ENCODE measurements at regions of chr1 and their contacts with region 1.

Region 1: GRCh38 chr1:41573785-41574713 is 89.6 kb upstream of the EDN2 start:
- DNase-seq: peak; percentile 56
- ATAC-seq: peak; percentile 99
- H3K4me3 ChIP-seq: no peak overlapping the region
- H3K27ac ChIP-seq: no peak overlapping the region
- H3K4me1 ChIP-seq: peaks cover 14% of the 10 kb centered on the region
- H3K27me3 ChIP-seq: no peaks in the 10 kb centered on the region
- CTCF ChIP-seq: peak; percentile 95 to 98 (median 96); a peak in 5 of 6 replicates
- EP300 ChIP-seq: no peak
- POLR2A ChIP-seq: no peak
- RAD21 ChIP-seq: peak; percentile 99

Region 2: DNA sequence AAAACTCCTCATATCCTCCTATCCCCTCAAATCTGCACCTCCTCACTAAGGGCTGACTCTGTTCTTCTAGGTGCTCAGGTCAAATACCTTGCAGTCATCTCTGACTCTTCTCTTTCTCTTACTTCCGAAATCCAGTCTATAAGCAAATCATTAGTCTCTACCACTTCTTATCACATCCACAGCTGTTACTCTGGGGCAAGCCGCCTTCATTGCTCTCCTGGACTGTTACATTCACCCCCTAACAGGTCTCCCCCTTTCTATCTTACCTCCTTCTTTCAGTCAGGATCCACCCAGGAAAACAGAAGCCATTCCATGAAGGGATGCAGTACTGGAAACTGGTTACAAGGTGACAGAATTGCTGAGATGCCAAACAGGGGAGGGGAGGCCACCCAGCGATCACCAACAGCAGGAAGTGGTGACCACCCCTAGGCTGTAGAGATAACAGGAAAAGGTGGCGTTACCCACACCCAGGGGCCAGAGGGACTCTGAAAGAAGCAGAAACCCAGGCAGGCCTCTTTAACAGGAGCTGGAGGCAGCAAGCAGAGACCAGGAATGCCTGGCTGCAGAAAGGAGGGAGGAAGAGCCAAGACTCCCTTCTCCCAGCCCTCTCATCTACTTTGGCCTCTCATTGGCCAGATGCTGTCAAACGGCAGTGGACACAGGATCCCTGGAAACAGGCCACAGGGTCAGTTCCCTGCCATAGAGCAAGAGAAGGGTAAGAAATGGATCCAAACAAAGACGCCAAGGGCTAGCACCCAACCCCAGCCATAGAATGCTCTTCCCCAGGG is 268.3 kb before region 1 on chr1:
- CTCF ChIA-PET with region 1: no interaction called
- POLR2A ChIA-PET with region 1: no interaction called
- RAD21 ChIA-PET with region 1: no interaction called
- SMC1A ChIA-PET with region 1: no interaction called
- in situ Hi-C with region 1: no loop called
- intact Hi-C with region 1: no loop called
- DNase-seq: no peak
- ATAC-seq: no peak
- H3K4me3 ChIP-seq: no peak overlapping the region
- H3K27ac ChIP-seq: no peak overlapping the region
- H3K4me1 ChIP-seq: no peaks in the 10 kb centered on the region
- H3K27me3 ChIP-seq: no peaks in the 10 kb centered on the region; a peak in 3 of 4 replicates
- CTCF ChIP-seq: no peak
- EP300 ChIP-seq: no peak
- POLR2A ChIP-seq: no peak
- RAD21 ChIP-seq: no peak

Region 3: GRCh38 chr1:41622859-41623723 is 49.0 kb after region 1 on chr1:
- CTCF ChIA-PET with region 1: interaction called, 3 read pairs
- POLR2A ChIA-PET with region 1: no interaction called
- RAD21 ChIA-PET with region 1: interaction called, 4 read pairs
- SMC1A ChIA-PET with region 1: interaction called, 13 read pairs
- in situ Hi-C with region 1: no loop called
- intact Hi-C with region 1: no loop called
- DNase-seq: peak; percentile 70
- ATAC-seq: peak; percentile 88
- H3K4me3 ChIP-seq: peak overlapping the region; percentile 48
- H3K27ac ChIP-seq: peak overlapping the region; percentile 74
- H3K4me1 ChIP-seq: peaks cover 29% of the 10 kb centered on the region
- H3K27me3 ChIP-seq: no peaks in the 10 kb centered on the region
- CTCF ChIP-seq: no peak
- EP300 ChIP-seq: peak; percentile 55 to 76; a peak in 2 of 4 replicates
- POLR2A ChIP-seq: no peak
- RAD21 ChIP-seq: peak; percentile 13; the same call in 1 of the 2 replicates

Region 4: DNA sequence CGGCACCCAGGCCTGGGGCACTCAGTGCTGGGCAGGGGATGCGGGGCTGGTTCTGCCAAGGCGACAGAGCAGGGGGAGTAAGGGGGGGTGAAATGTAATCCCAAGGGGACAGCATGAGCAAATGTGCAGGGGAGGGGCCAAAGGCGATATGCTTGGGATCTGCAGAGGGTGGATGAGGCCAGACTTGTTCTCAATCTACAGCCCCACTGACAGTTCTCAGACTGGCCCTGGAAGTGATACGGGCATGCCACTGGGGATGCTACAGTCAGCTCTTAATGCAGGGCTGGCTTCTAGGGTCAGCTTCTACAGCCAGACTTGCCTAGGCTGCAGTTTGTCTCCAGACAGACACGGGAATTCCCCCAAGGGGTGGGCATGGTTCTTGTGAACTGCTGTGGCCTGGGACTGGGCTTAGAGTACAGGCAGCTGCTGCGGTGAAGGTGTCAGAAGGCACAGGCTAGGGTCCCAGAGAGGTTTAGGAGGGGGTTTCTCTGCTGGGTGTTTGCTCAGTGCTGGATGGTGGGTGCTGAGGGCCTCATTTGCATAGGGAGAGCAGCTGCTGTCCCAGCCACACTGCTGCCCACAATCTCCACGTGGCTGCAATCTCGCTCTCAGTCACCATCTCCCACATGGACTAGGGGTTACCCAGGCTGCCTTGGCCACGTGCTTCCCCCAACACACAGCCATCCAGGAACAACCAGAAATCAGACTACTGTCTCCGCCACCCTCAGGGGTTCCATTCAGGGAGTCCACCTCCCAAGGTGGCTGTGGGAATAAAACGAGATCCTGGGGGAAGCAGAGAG is 154.6 kb after region 1 on chr1:
- CTCF ChIA-PET with region 1: interaction called, 17 read pairs
- POLR2A ChIA-PET with region 1: no interaction called
- RAD21 ChIA-PET with region 1: interaction called, 18 read pairs
- SMC1A ChIA-PET with region 1: interaction called, 25 read pairs
- in situ Hi-C with region 1: no loop called
- intact Hi-C with region 1: loop called (anchors 1 kb)
- DNase-seq: peak; percentile 100
- ATAC-seq: peak; percentile 87
- H3K4me3 ChIP-seq: no peak overlapping the region
- H3K27ac ChIP-seq: peak overlapping the region; percentile 93
- H3K4me1 ChIP-seq: peaks cover 56% of the 10 kb centered on the region
- H3K27me3 ChIP-seq: no peaks in the 10 kb centered on the region
- CTCF ChIP-seq: no peak
- EP300 ChIP-seq: peak; percentile 97
- POLR2A ChIP-seq: no peak
- RAD21 ChIP-seq: peak; percentile 23; the same call in 1 of the 2 replicates

Region 5: GRCh38 chr1:41795205-41795762 is 221.2 kb after region 1 on chr1:
- CTCF ChIA-PET with region 1: no interaction called
- POLR2A ChIA-PET with region 1: no interaction called
- RAD21 ChIA-PET with region 1: interaction called, 11 read pairs
- SMC1A ChIA-PET with region 1: interaction called, 5 read pairs
- in situ Hi-C with region 1: no loop called
- intact Hi-C with region 1: no loop called
- DNase-seq: no peak
- ATAC-seq: no peak
- H3K4me3 ChIP-seq: no peak overlapping the region
- H3K27ac ChIP-seq: no peak overlapping the region
- H3K4me1 ChIP-seq: peaks cover 27% of the 10 kb centered on the region
- H3K27me3 ChIP-seq: no peaks in the 10 kb centered on the region
- CTCF ChIP-seq: 0 out of 6 replicates have a peak, but pooled peaks of 1 of the 3 experiments have one; percentile 1
- EP300 ChIP-seq: no peak
- POLR2A ChIP-seq: no peak
- RAD21 ChIP-seq: 0 out of 2 replicates have a peak, but pooled peaks have one; percentile 13

Region 6: GRCh38 chr1:41868599-41868998 is 294.6 kb after region 1 on chr1:
- CTCF ChIA-PET with region 1: interaction called, 35 read pairs
- POLR2A ChIA-PET with region 1: interaction called, 4 read pairs
- RAD21 ChIA-PET with region 1: interaction called, 13 read pairs
- SMC1A ChIA-PET with region 1: interaction called, 14 read pairs
- in situ Hi-C with region 1: no loop called
- intact Hi-C with region 1: loop called (anchors 1 kb)
- DNase-seq: peak; percentile 63
- ATAC-seq: peak; percentile 96
- H3K4me3 ChIP-seq: no peak overlapping the region
- H3K27ac ChIP-seq: peak overlapping the region; percentile 27; the same call in 1 of the 2 replicates
- H3K4me1 ChIP-seq: peaks cover 19% of the 10 kb centered on the region
- H3K27me3 ChIP-seq: no peaks in the 10 kb centered on the region
- CTCF ChIP-seq: peak; percentile 60 to 71 (median 66); a peak in 5 of 6 replicates
- EP300 ChIP-seq: no peak
- POLR2A ChIP-seq: no peak
- RAD21 ChIP-seq: peak; percentile 60

Region 7: GRCh38 chr1:42173155-42173933 is 599.3 kb after region 1 on chr1:
- CTCF ChIA-PET with region 1: interaction called, 48 read pairs
- POLR2A ChIA-PET with region 1: no interaction called
- RAD21 ChIA-PET with region 1: interaction called, 28 read pairs
- SMC1A ChIA-PET with region 1: interaction called, 9 read pairs
- in situ Hi-C with region 1: loop called (anchors 10 kb)
- intact Hi-C with region 1: loop called (anchors 1 kb)
- DNase-seq: no peak
- ATAC-seq: peak; percentile 86
- H3K4me3 ChIP-seq: no peak overlapping the region
- H3K27ac ChIP-seq: no peak overlapping the region
- H3K4me1 ChIP-seq: no peaks in the 10 kb centered on the region
- H3K27me3 ChIP-seq: no peaks in the 10 kb centered on the region
- CTCF ChIP-seq: peak; percentile 92 to 98 (median 96)
- EP300 ChIP-seq: no peak
- POLR2A ChIP-seq: no peak
- RAD21 ChIP-seq: peak; percentile 73

Region 8: DNA sequence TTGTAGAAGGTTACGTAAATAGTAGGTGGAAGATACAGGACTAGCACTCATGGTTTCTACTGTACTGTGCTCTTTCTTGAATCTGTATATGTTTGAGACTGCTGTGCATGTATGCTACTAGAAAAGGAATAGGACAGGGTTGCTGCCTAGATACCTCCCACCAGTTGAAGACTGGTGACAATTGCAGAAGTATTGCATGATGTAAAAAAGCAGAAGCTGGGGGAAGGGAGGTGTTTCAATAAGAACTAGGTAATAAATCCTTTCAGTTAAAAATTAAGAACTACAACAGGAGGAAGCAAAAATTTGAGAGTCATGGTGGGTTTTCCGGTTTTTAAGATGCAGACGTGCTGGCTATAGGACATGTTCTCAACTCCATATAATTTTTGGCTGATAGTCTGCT is 977.1 kb after region 1 on chr1:
- CTCF ChIA-PET with region 1: no interaction called
- POLR2A ChIA-PET with region 1: no interaction called
- RAD21 ChIA-PET with region 1: no interaction called
- SMC1A ChIA-PET with region 1: no interaction called
- in situ Hi-C with region 1: no loop called
- intact Hi-C with region 1: no loop called
- DNase-seq: no peak
- ATAC-seq: no peak
- H3K4me3 ChIP-seq: no peak overlapping the region
- H3K27ac ChIP-seq: no peak overlapping the region
- H3K4me1 ChIP-seq: no peaks in the 10 kb centered on the region
- H3K27me3 ChIP-seq: no peaks in the 10 kb centered on the region
- CTCF ChIP-seq: no peak
- EP300 ChIP-seq: no peak
- POLR2A ChIP-seq: no peak
- RAD21 ChIP-seq: no peak